Mammary epithelial cell (primary cell): ENCODE measurements at regions of chr4 and their contacts with region 1.

Region 1: DNA sequence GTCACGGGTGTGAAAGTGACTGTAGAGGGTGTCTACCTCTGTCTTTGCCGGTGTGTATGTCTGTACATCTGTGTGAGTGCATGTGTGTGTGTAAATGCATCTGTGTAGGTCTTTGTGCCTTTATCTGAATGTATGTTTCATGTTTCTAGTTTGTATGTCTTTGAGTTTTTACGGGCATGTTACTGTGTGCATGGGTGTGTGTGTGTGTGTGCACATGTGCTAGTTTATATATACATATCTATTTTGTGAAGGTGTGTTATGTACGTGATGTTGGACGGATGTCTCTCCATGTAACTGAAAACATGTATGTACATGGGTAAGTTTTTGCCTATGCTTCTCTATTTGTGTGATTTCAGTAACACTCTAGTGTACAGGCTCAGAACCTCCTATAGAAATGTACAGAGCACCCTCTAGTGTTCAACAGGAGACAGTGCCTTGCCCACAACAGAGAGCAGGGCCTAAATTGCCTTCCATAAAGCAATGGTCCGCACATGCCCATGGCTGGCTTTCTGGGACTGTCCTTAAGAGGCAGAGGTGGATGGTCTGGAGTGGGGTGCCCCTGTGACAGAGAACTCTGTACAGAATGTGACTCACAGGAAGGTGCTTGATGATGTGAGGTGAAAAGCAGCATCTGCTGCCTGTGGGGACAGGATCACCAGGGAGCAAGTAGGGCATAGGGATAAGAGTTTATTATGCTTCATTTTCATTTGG is 343.5 kb downstream of the RAPGEF2 start:
- DNase-seq: peak; percentile 68
- H3K4me3 ChIP-seq: no peak overlapping the region
- H3K27ac ChIP-seq: no peak overlapping the region
- H3K4me1 ChIP-seq: peaks cover 17% of the 10 kb centered on the region
- H3K27me3 ChIP-seq: no peaks in the 10 kb centered on the region
- CTCF ChIP-seq: peak; percentile 91

Region 2: GRCh38 chr4:158729716-158730559 is 716.5 kb before region 1 on chr4:
- CTCF ChIA-PET with region 1: no interaction called
- dilution Hi-C with region 1: no loop called
- in situ Hi-C with region 1: loop called in 1 of 2 experiments (anchors 25 kb)
- intact Hi-C with region 1: loop called (anchors 2 kb)
- DNase-seq: peak; percentile 45
- H3K4me3 ChIP-seq: no peak overlapping the region
- H3K27ac ChIP-seq: no peak overlapping the region
- H3K4me1 ChIP-seq: no peaks in the 10 kb centered on the region
- H3K27me3 ChIP-seq: peaks cover 2% of the 10 kb centered on the region
- CTCF ChIP-seq: peak; percentile 91 to 94

Region 3: DNA sequence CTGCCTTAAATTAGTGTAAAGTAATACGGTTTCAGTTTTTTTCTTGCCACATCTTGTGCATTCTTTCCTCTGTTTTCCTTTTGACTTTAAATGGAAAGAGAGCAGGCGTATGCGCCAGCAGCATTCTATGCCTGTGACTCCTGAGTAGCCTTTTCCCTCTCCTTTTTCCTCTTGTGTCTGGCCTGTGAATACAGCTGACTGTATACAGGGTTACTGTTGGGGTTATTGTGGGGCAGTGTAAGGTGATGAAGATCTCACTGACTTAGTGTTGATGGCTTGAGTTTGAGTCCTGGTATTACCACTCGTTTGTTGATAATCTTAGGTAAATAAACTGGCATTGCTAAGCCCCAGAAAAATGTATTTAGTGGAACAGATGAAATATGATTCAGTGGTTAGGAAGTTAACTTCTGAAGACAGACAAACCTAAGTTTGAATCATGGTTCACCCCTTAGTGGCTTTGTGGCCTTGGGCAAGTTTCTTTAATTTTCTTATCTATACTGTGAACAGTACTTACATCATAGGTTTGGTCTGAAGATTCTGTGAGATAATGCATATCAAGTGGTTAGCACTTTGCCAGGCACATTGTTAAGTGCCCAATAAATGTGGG is 572.5 kb before region 1 on chr4:
- CTCF ChIA-PET with region 1: no interaction called
- dilution Hi-C with region 1: no loop called
- in situ Hi-C with region 1: loop called in 1 of 2 experiments (anchors 25 kb)
- intact Hi-C with region 1: loop called (anchors 5 kb)
- DNase-seq: peak; percentile 87
- H3K4me3 ChIP-seq: no peak overlapping the region
- H3K27ac ChIP-seq: no peak overlapping the region
- H3K4me1 ChIP-seq: peaks cover 18% of the 10 kb centered on the region
- H3K27me3 ChIP-seq: no peaks in the 10 kb centered on the region
- CTCF ChIP-seq: no peak

Region 4: DNA sequence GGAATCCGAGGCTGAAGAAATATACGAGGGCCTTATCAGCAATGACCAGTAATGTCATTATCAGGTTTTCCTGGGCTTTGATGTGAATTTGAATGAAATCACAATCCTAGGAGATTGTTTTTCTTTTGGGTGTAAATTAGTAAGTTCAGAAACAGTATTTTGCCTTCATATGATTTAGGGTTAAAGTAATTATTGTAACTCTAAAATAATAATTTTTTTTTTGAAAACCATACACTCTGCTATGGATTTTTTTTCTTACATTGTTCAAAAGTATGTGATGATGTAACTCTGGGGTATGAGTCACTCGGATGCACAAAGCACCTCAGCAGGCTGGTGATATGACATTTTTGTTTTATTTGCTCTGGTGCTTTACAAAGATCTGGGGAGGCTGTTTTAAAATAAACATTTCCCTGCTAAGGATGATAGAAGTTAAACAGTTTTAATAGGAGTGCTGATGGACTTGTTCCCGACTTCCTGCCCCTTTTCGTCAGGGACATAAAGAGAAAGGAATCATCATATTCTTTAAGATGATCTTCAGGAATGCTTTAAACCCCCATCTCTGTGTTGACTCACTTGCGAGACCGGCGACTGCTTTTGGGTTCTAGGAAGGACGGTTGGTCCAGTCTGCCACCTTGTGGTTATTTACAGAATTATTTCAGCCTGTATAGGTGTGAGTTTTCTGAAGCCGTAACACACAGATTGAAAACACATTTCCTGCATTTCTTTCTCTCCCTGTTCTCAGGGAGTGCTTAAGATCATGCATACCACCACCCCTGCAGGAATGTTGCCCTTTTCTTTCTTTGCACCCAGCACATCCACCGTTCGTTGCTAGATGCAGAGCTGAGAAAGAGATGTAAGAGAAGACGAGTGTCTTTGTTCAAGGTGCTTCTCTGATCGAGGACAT is 271.1 kb before region 1 on chr4:
- CTCF ChIA-PET with region 1: no interaction called
- dilution Hi-C with region 1: no loop called
- in situ Hi-C with region 1: no loop called
- intact Hi-C with region 1: loop called (anchors 1 kb)
- DNase-seq: peak; percentile 80
- H3K4me3 ChIP-seq: peak overlapping the region; percentile 8 to 28 (median 24)
- H3K27ac ChIP-seq: peak overlapping the region; percentile 28
- H3K4me1 ChIP-seq: peaks cover 16% of the 10 kb centered on the region
- H3K27me3 ChIP-seq: no peaks in the 10 kb centered on the region
- CTCF ChIP-seq: peak; percentile 60 to 76

Region 5: GRCh38 chr4:159206427-159206871 is 240.0 kb before region 1 on chr4:
- CTCF ChIA-PET with region 1: interaction called, 4 read pairs
- dilution Hi-C with region 1: no loop called
- in situ Hi-C with region 1: loop called (anchors 5 to 10 kb)
- intact Hi-C with region 1: loop called (anchors 1 kb)
- DNase-seq: peak; percentile 60
- H3K4me3 ChIP-seq: peak overlapping the region in 1 of 3 experiments; percentile 20
- H3K27ac ChIP-seq: peak overlapping the region; percentile 20
- H3K4me1 ChIP-seq: peaks cover 7% of the 10 kb centered on the region
- H3K27me3 ChIP-seq: no peaks in the 10 kb centered on the region
- CTCF ChIP-seq: no peak

Region 6: DNA sequence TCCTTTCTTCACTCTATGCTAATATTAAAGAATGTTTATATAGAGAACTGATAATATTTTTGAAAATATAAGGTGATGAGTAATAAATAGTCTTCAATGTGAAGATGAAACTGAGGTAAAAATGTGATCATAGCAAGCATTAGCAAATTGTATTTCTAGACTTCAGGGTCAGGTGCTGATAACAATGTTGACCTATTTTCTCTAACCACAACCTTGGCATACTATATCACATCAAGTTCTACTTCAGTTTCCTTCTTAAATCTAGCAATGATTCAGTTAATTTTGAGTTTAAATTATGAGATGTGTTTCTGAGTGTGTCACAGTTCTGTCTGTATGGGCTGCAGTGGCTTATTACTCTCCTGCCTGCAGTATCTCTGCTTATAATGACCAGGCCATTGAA is 134.2 kb before region 1 on chr4:
- CTCF ChIA-PET with region 1: no interaction called
- dilution Hi-C with region 1: no loop called
- in situ Hi-C with region 1: no loop called
- intact Hi-C with region 1: loop called (anchors 1 kb)
- DNase-seq: no peak
- H3K4me3 ChIP-seq: no peak overlapping the region
- H3K27ac ChIP-seq: no peak overlapping the region
- H3K4me1 ChIP-seq: peaks cover 19% of the 10 kb centered on the region
- H3K27me3 ChIP-seq: no peaks in the 10 kb centered on the region
- CTCF ChIP-seq: no peak

Region 7: GRCh38 chr4:159390648-159391047 is 55.8 kb before region 1 on chr4:
- CTCF ChIA-PET with region 1: no interaction called
- dilution Hi-C with region 1: no loop called
- in situ Hi-C with region 1: no loop called
- intact Hi-C with region 1: loop called (anchors 5 kb)
- DNase-seq: peak; percentile 99
- H3K4me3 ChIP-seq: no peak overlapping the region
- H3K27ac ChIP-seq: peak overlapping the region; percentile 52
- H3K4me1 ChIP-seq: peaks cover 10% of the 10 kb centered on the region
- H3K27me3 ChIP-seq: no peaks in the 10 kb centered on the region
- CTCF ChIP-seq: no peak

Region 8: GRCh38 chr4:159435561-159436023 is 10.8 kb before region 1 on chr4:
- CTCF ChIA-PET with region 1: no interaction called
- dilution Hi-C with region 1: no loop called
- in situ Hi-C with region 1: no loop called
- intact Hi-C with region 1: no loop called
- DNase-seq: peak; percentile 42
- H3K4me3 ChIP-seq: no peak overlapping the region
- H3K27ac ChIP-seq: no peak overlapping the region
- H3K4me1 ChIP-seq: peaks cover 19% of the 10 kb centered on the region
- H3K27me3 ChIP-seq: no peaks in the 10 kb centered on the region
- CTCF ChIP-seq: no peak

Region 9: GRCh38 chr4:159564615-159565014 is 118.2 kb after region 1 on chr4:
- CTCF ChIA-PET with region 1: no interaction called
- dilution Hi-C with region 1: no loop called
- in situ Hi-C with region 1: no loop called
- intact Hi-C with region 1: no loop called
- DNase-seq: no peak
- H3K4me3 ChIP-seq: no peak overlapping the region
- H3K27ac ChIP-seq: no peak overlapping the region
- H3K4me1 ChIP-seq: no peaks in the 10 kb centered on the region
- H3K27me3 ChIP-seq: peaks cover 2% of the 10 kb centered on the region
- CTCF ChIP-seq: no peak